ENCODE measurements at regions of chr7 and their contacts with region 1.

Region 1: GRCh38 chr7:50272808-50273207 is 31.7 kb upstream of the IKZF1 start:
- DNase-seq: no peak
- H3K4me3 ChIP-seq: no peak overlapping the region
- H3K4me3 Mint-ChIP-seq: no peak overlapping the region
- H3K27ac ChIP-seq: no peak overlapping the region
- H3K27ac Mint-ChIP-seq: peak overlapping the region in 5 of 7 donors; percentile 6 to 97 (median 7)
- H3K4me1 ChIP-seq: peaks cover 74% of the 10 kb centered on the region
- H3K4me1 Mint-ChIP-seq: peaks cover 49 to 78% (median 65%) of the 10 kb centered on the region in 4 donors
- H3K27me3 ChIP-seq: no peaks in the 10 kb centered on the region
- H3K27me3 Mint-ChIP-seq: no peaks in the 10 kb centered on the region

Region 2: GRCh38 chr7:50293509-50294179 is 20.8 kb after region 1 on chr7:
- CTCF ChIA-PET with region 1: interaction called, 8 read pairs
- POLR2A ChIA-PET with region 1: interaction called, 575 read pairs
- intact Hi-C with region 1: loop called (anchors 2 kb)
- DNase-seq: no peak
- H3K4me3 ChIP-seq: no peak overlapping the region
- H3K4me3 Mint-ChIP-seq: no peak overlapping the region
- H3K27ac ChIP-seq: no peak overlapping the region
- H3K27ac Mint-ChIP-seq: no peak overlapping the region
- H3K4me1 ChIP-seq: peaks cover 3% of the 10 kb centered on the region
- H3K4me1 Mint-ChIP-seq: peaks cover 18 to 44% (median 29%) of the 10 kb centered on the region in 4 donors
- H3K27me3 ChIP-seq: no peaks in the 10 kb centered on the region
- H3K27me3 Mint-ChIP-seq: no peaks in the 10 kb centered on the region

Region 3: DNA sequence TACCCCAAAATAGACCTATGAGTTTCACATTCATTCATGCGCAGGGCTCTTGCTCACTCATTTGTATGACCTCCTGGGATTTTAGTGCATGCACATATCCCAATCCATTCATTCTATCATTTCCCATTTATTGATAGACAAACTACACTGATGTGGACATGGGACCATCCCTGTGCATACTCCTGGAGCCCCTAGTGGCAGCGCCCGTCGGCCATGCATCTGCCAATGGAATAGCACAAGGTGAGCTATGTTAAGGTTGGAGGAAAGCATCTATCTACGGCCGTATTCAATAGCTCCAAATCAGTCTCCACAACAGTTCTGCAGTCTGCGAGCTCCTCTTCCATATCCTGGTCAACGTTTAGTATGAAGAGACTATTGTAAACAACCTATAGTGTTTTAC is 209.1 kb after region 1 on chr7:
- CTCF ChIA-PET with region 1: no interaction called
- POLR2A ChIA-PET with region 1: no interaction called
- intact Hi-C with region 1: no loop called
- DNase-seq: no peak
- H3K4me3 ChIP-seq: no peak overlapping the region
- H3K4me3 Mint-ChIP-seq: no peak overlapping the region
- H3K27ac ChIP-seq: no peak overlapping the region
- H3K27ac Mint-ChIP-seq: no peak overlapping the region
- H3K4me1 ChIP-seq: no peaks in the 10 kb centered on the region
- H3K4me1 Mint-ChIP-seq: no peaks in the 10 kb centered on the region
- H3K27me3 ChIP-seq: no peaks in the 10 kb centered on the region
- H3K27me3 Mint-ChIP-seq: peaks cover 2 to 9% of the 10 kb centered on the region in 2 donors